ENCODE measurements at regions of chr12 and their contacts with region 1.

Region 1: DNA sequence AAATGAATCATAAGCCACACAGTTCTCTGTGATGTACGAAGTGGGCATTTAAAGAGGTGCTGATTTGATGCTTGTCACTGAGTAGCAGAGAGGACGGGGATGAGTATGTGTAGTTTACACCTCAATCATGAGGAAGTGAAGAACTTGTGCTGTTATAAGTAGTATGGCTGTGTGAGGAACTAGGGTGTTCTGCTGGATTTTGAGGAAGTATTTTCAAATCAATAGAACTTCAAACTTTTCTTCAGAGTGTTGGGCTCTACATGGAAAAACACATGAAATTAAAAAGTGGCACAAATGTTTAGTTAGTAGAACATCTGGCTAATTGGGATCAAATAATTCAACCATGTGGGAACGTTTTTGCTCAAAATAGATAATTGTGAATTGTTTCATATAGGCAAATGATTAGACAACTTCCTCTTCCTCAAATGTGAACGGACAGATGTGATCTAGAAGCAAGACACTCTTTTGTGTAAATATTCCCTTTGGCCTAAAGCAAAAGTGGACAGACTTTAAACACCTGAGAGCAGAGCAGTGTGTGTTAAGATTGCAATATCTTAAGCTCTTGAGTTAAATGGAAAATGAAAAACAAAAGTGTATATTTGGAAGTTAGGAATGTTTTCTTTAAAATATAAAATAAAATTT is 168.5 kb downstream of the NAV3 start:
- H3K4me3 Mint-ChIP-seq: no peak overlapping the region
- H3K27ac Mint-ChIP-seq: peak overlapping the region; percentile 73
- H3K4me1 Mint-ChIP-seq: peaks cover 10% of the 10 kb centered on the region
- H3K27me3 Mint-ChIP-seq: no peaks in the 10 kb centered on the region

Region 2: GRCh38 chr12:77816196-77816595 is 183.0 kb before region 1 on chr12:
- intact Hi-C with region 1: no loop called
- H3K4me3 Mint-ChIP-seq: no peak overlapping the region
- H3K27ac Mint-ChIP-seq: no peak overlapping the region
- H3K4me1 Mint-ChIP-seq: no peaks in the 10 kb centered on the region
- H3K27me3 Mint-ChIP-seq: no peaks in the 10 kb centered on the region

Region 3: GRCh38 chr12:78120866-78121560 is 121.8 kb after region 1 on chr12:
- intact Hi-C with region 1: loop called (anchors 2 kb)
- H3K4me3 Mint-ChIP-seq: no peak overlapping the region
- H3K27ac Mint-ChIP-seq: no peak overlapping the region
- H3K4me1 Mint-ChIP-seq: peaks cover 2% of the 10 kb centered on the region
- H3K27me3 Mint-ChIP-seq: no peaks in the 10 kb centered on the region

Region 4: GRCh38 chr12:79174626-79175025 is 1175.4 kb after region 1 on chr12:
- intact Hi-C with region 1: loop called (anchors 5 kb)
- H3K4me3 Mint-ChIP-seq: no peak overlapping the region
- H3K27ac Mint-ChIP-seq: no peak overlapping the region
- H3K4me1 Mint-ChIP-seq: no peaks in the 10 kb centered on the region
- H3K27me3 Mint-ChIP-seq: no peaks in the 10 kb centered on the region

Region 5: DNA sequence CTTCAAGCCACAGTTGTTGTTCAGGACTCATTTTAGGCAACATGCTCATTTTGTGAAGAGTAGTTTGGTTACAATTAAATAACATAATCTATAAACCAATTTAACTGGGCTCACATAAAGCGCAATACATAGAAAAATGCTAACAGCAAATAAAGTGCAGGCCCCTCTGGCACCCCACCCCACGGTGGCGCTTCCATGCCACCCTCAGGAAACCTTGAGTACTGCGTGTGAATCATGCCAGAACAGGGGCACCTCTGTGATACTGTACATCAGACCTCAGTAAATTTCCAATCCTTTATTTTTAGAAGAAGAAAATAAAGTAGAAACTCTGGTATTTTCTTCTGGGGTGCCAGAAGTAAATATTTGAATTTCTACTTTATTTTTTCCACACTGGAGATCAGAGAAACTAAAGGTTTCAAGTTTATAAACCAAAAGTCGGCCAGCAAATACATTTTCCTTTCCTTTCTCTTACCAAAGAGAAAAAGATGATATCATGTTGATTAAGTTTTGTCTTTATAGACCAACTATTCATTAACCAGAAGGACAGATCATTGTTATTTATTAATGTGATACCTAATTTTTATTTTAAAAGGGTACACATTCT is 1374.8 kb after region 1 on chr12:
- intact Hi-C with region 1: loop called (anchors 10 kb)
- H3K4me3 Mint-ChIP-seq: no peak overlapping the region
- H3K27ac Mint-ChIP-seq: no peak overlapping the region
- H3K4me1 Mint-ChIP-seq: no peaks in the 10 kb centered on the region
- H3K27me3 Mint-ChIP-seq: no peaks in the 10 kb centered on the region

Measured in dendritic cell treated with granulocyte-macrophage colony-stimulating factor and Interleukin-4, amounts not matched to agents 40 ng/mL and 50 ng/mL, for 4 days (primary cell).